ENCODE measurements at regions of chr2 and their contacts with region 1.

Region 1: GRCh38 chr2:10408649-10409579 is 39.2 kb downstream of the ODC1 start:
- DNase-seq: peak; percentile 97
- H3K4me3 ChIP-seq: peak overlapping the region in 1 of 2 experiments; percentile 26; a peak in 1 of 4 replicates
- H3K27ac ChIP-seq: peak overlapping the region in 1 of 2 experiments; percentile 62; a peak in 2 of 4 replicates
- H3K4me1 ChIP-seq: peaks cover 34 to 55% of the 10 kb centered on the region in 2 experiments
- H3K27me3 ChIP-seq: no peaks in the 10 kb centered on the region
- CTCF ChIP-seq: peak; percentile 99
- EP300 ChIP-seq: no peak
- RAD21 ChIP-seq: peak; percentile 99

Region 2: DNA sequence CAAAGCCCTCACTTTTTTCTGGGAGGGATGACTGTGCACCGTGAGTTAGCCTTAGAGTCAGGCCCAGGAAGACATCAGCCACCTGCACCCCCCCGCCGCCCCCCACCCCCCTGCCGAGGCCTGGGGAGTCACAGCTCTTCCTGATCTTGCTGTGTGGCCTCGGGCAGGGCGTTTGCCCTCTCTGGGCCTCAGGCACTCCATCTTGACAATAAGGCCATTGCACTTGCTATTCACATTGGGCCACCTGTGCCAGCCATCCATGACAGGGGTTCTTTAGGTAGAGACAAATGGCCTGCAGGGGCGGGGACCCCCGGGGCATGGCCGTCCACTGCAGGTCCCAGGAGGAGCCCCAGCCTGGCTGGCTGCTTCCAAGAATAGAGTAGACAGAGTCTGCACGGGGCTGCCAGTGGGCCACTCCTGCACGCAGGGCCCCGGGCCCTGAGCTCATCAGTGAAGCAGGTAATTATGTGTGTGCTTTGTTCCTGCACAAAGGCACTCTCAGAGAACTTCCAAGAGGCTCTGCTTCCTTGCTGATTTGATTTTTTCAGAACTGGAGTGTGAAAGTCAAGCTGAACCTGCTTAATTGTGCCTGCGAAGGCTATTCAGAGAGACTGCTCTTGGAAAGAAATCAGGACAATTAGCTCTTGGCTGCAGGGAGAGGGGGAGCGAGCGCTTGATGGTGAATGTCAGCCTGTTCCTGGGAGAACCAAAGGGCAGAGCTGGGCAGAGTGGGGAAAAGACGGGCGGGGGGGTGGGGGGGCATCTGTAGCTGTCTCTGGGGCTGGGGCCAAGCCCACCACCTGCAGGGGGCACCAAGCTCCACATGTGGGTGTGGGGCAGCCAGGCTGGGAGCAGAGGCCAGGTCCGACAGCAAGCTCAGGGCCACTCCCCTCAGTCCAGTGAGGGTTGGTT is 246.1 kb before region 1 on chr2:
- CTCF ChIA-PET with region 1: interaction called, 37 read pairs
- POLR2A ChIA-PET with region 1: interaction called, 6 read pairs
- DNase-seq: peak; percentile 81
- H3K4me3 ChIP-seq: no peak overlapping the region
- H3K27ac ChIP-seq: peak overlapping the region in 1 of 2 experiments; percentile 39; a peak in 1 of 4 replicates
- H3K4me1 ChIP-seq: peaks cover 0 to 47% of the 10 kb centered on the region in 2 experiments; a peak in 1 of 4 replicates
- H3K27me3 ChIP-seq: no peaks in the 10 kb centered on the region
- CTCF ChIP-seq: no peak
- EP300 ChIP-seq: no peak
- RAD21 ChIP-seq: peak; percentile 51

Region 3: DNA sequence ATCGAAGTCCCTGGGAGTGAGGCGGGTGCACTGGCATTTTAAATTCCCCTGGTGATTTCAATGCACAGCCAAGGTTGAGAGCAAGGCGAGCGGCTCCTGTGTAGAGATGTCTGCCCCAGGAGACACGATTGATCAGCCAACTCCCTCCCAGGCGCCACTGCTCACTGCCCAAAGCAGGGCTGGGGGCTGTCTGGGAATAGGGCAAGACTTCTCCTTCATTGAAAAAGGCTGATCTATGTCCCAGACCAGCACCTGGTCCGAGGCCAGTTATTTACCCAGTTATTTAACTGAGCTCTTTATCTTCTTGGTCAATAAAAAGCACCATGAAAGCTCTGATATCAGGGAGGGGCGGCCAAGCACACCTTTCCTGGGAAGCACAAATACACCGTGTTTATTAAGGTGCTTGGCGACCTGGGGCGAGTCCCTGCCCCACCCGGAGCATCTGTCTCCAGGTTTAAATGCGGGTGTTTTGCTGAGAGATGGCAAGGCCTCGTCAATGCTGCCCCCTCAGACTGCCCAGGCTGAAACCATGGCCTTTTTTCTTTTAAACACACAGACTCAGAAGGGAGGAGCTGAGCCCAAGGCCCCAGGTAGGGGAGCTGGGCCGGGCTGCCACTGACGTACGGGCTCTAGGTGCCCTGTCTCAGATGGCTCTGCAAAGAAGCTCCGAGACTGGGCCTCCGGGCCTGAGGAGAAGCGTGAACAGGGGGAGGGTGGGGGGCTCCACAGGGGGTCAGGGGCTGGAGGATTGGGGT is 180.1 kb before region 1 on chr2:
- CTCF ChIA-PET with region 1: interaction called, 13 read pairs
- POLR2A ChIA-PET with region 1: no interaction called
- DNase-seq: no peak
- H3K4me3 ChIP-seq: no peak overlapping the region
- H3K27ac ChIP-seq: no peak overlapping the region
- H3K4me1 ChIP-seq: no peaks in the 10 kb centered on the region; a peak in 1 of 4 replicates
- H3K27me3 ChIP-seq: no peaks in the 10 kb centered on the region
- CTCF ChIP-seq: no peak
- EP300 ChIP-seq: no peak
- RAD21 ChIP-seq: no peak

Region 4: DNA sequence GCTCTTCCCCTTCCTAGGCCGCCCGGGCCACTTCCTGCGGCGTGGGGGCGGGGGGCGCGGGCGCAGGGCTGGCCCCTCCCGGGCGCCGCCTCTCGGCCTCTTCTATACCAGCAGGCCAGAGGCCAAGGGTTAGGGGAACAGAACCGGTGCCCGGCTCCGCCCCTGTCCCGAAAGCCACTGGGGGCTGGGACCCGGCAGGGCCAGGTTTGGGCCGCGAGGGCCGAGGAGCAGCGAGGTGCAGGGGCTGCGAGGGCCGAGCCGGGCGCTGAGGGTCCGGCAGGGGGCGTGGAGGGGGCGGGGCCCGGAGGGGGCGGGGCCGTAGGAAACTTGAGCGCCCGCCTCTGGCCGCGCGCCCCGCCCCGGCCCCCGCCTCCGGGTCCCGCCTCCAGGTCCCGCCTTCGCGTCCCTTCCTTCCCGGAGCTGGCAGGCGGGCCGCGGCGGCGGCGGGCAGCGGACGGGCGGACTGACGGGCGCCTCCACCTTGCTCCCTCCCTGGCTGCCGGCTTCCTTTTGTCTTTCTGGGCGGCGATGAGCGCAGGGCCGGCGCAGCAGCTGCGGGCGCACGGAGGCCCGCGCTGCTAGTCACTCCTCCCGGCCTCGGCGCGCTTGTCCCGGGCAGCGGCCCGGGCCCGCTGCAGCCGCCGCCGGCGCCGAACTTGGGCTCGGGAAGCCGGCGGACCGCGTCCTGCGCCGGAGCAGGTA is 106.3 kb before region 1 on chr2 and contains the start of gene HPCAL1:
- CTCF ChIA-PET with region 1: interaction called, 167 read pairs
- POLR2A ChIA-PET with region 1: interaction called, 6 read pairs
- DNase-seq: peak; percentile 100
- H3K4me3 ChIP-seq: peak within 1 kb of the TSS; percentile 64 to 80
- H3K27ac ChIP-seq: peak within 1 kb of the TSS; percentile 15 to 85; a peak in 3 of 4 replicates
- H3K4me1 ChIP-seq: peaks cover 11 to 59% of the 10 kb centered on the region in 2 experiments
- H3K27me3 ChIP-seq: no peaks in the 10 kb centered on the region
- CTCF ChIP-seq: peak; percentile 63
- EP300 ChIP-seq: no peak
- RAD21 ChIP-seq: peak; percentile 34; the same call in 1 of the 2 replicates
- polyA plus RNA-seq, gene HPCAL1: 34.6 and 77.0 TPM in 2 replicates

Region 5: DNA sequence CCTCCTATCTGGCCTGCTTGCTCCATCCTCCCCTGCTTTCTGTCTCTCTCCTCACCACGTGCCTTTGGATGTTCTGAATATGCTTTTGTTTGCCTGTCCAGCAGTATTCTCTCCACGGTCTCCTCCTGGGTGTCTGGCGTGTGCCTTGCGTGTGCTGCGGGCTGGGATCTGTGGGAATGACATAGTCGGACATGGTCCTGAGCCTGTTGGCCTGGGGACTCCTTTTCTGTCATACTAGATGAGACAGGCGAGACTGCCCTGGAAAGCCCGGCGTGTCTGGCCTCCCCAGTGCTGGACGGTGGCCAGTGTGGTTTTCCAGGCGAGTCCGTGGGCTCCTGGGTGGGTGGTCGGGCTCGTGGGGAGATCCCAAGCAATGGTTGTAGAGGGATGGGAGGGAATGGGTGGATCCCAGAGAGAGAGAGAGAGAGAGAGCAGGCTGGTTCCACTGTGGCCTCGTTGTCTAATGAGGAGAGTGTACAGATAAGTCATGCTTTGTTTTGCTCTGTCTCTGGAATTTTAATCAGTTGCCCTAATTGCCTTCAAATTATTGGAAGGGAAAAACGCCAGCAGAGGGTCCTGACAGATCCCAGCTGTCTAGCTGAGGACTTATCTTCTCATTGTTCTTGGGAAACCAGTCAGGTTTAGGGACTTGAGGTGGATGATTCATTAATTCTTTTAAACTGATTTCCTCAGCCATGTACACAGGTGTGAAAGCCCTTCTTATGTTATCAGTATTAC is 47.9 kb before region 1 on chr2:
- CTCF ChIA-PET with region 1: interaction called, 23 read pairs
- POLR2A ChIA-PET with region 1: no interaction called
- DNase-seq: peak; percentile 81
- H3K4me3 ChIP-seq: no peak overlapping the region
- H3K27ac ChIP-seq: peak overlapping the region in 1 of 2 experiments; percentile 69; a peak in 2 of 4 replicates
- H3K4me1 ChIP-seq: peaks cover 10 to 75% of the 10 kb centered on the region in 2 experiments; a peak in 2 of 4 replicates
- H3K27me3 ChIP-seq: no peaks in the 10 kb centered on the region
- CTCF ChIP-seq: no peak
- EP300 ChIP-seq: peak in 1 of 2 experiments; percentile 44; a peak in 1 of 4 replicates
- RAD21 ChIP-seq: no peak

Measured in SK-N-SH (cell line).